ENCODE measurements at regions of chr13 and their contacts with region 1.

Region 1: DNA sequence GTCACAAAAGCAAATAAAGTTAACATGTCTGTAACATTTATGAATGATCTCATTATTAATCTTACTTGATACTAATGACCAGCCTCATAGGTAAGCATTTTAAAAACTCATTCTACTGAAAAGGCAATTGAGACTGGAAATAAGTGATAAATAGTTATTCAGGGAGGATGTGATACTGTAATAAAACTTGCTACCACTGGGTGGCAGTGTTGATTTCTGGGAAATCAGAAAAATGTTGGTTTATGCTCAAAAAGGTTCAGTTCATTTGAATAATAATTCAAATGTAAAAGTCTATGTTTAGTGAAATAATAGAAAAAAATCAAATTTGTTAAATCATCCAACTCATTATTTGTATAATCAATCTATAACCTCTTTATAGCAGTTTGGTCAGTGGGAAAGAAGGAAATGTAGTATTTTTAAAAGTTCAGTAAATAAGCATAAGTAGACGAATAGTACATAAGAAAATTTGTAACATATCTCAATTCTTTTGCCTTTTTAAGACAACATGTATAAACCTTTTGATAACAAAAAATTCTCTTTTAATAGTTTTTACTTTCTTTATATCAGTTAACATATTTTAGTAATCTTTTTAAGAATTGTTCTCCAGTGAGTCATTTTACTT is 9.6 kb downstream of the ABHD13 start:
- DNase-seq: peak in 4 of 5 donors; percentile 41 to 56 (median 46)
- H3K4me3 ChIP-seq: no peak overlapping the region
- H3K4me3 Mint-ChIP-seq: no peak overlapping the region
- H3K27ac ChIP-seq: no peak overlapping the region
- H3K27ac Mint-ChIP-seq: peak overlapping the region in 1 of 7 donors; percentile 69
- H3K4me1 ChIP-seq: peaks cover 43% of the 10 kb centered on the region
- H3K4me1 Mint-ChIP-seq: peaks cover 41 to 74% (median 60%) of the 10 kb centered on the region in 4 donors
- H3K27me3 ChIP-seq: no peaks in the 10 kb centered on the region
- H3K27me3 Mint-ChIP-seq: no peaks in the 10 kb centered on the region

Region 2: DNA sequence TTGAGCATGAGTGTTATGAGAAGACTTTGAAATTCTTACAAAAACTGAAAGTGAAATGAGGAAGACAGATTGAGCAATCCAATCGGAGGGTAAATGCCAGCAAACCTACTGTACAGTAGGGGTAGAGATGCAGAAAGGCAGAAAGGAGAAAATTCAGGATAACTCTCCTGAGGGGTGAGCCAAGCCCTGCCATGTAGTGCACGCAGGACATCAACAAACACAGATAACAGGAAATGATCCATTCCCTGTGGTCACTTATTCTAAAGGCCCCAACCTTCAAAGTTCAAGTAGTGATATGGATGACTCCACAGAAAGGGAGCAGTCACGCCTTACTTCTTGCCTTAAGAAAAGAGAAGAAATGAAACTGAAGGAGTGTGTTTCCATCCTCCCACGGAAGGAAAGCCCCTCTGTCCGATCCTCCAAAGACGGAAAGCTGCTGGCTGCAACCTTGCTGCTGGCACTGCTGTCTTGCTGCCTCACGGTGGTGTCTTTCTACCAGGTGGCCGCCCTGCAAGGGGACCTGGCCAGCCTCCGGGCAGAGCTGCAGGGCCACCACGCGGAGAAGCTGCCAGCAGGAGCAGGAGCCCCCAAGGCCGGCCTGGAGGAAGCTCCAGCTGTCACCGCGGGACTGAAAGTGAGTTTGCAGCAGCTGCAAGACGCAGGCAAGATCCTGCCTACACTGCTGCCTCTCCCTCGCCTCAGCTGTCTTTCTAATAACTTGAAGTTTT is 42.0 kb after region 1 on chr13 and contains the start of gene TNFSF13B:
- CTCF ChIA-PET with region 1: interaction called, 3 read pairs
- POLR2A ChIA-PET with region 1: interaction called, 4 read pairs
- intact Hi-C with region 1: loop called (anchors 1 kb)
- DNase-seq: peak; percentile 16 to 60 (median 28)
- H3K4me3 ChIP-seq: peak within 1 kb of the TSS; percentile 49 to 58
- H3K4me3 Mint-ChIP-seq: peak within 1 kb of the TSS; percentile 83 to 95 (median 90)
- H3K27ac ChIP-seq: peak within 1 kb of the TSS; percentile 51
- H3K27ac Mint-ChIP-seq: peak within 1 kb of the TSS; percentile 81 to 94 (median 90)
- H3K4me1 ChIP-seq: peaks cover 31% of the 10 kb centered on the region
- H3K4me1 Mint-ChIP-seq: peaks cover 32 to 72% (median 47%) of the 10 kb centered on the region in 4 donors
- H3K27me3 ChIP-seq: no peaks in the 10 kb centered on the region
- H3K27me3 Mint-ChIP-seq: no peaks in the 10 kb centered on the region
- total RNA-seq, gene TNFSF13B: 35.8 to 37.9 TPM

Region 3: GRCh38 chr13:108305655-108306054 is 77.9 kb after region 1 on chr13:
- CTCF ChIA-PET with region 1: interaction called, 3 read pairs
- POLR2A ChIA-PET with region 1: interaction called, 3 read pairs
- intact Hi-C with region 1: loop called (anchors 2 kb)
- DNase-seq: no peak
- H3K4me3 ChIP-seq: no peak overlapping the region
- H3K4me3 Mint-ChIP-seq: peak overlapping the region in 3 of 8 donors; percentile 28 to 44 (median 34)
- H3K27ac ChIP-seq: no peak overlapping the region
- H3K27ac Mint-ChIP-seq: peak overlapping the region in 6 of 7 donors; percentile 15 to 91 (median 44)
- H3K4me1 ChIP-seq: peaks cover 26% of the 10 kb centered on the region
- H3K4me1 Mint-ChIP-seq: peaks cover 10 to 31% (median 14%) of the 10 kb centered on the region in 4 donors
- H3K27me3 ChIP-seq: no peaks in the 10 kb centered on the region
- H3K27me3 Mint-ChIP-seq: no peaks in the 10 kb centered on the region

Region 4: GRCh38 chr13:108322206-108322824 is 94.6 kb after region 1 on chr13:
- CTCF ChIA-PET with region 1: interaction called, 3 read pairs
- POLR2A ChIA-PET with region 1: interaction called, 3 read pairs
- intact Hi-C with region 1: loop called (anchors 1 kb)
- DNase-seq: peak in 4 of 5 donors; percentile 51 to 60 (median 54)
- H3K4me3 ChIP-seq: no peak overlapping the region
- H3K4me3 Mint-ChIP-seq: peak overlapping the region in 2 of 8 donors; percentile 37 to 40
- H3K27ac ChIP-seq: no peak overlapping the region
- H3K27ac Mint-ChIP-seq: peak overlapping the region in 1 of 7 donors; percentile 41
- H3K4me1 ChIP-seq: peaks cover 21% of the 10 kb centered on the region
- H3K4me1 Mint-ChIP-seq: peaks cover 13 to 49% (median 33%) of the 10 kb centered on the region in 4 donors
- H3K27me3 ChIP-seq: no peaks in the 10 kb centered on the region
- H3K27me3 Mint-ChIP-seq: no peaks in the 10 kb centered on the region

Region 5: GRCh38 chr13:108407495-108407894 is 179.7 kb after region 1 on chr13:
- CTCF ChIA-PET with region 1: no interaction called
- POLR2A ChIA-PET with region 1: no interaction called
- intact Hi-C with region 1: loop called (anchors 5 kb)
- DNase-seq: no peak
- H3K4me3 ChIP-seq: no peak overlapping the region
- H3K4me3 Mint-ChIP-seq: peak overlapping the region in 1 of 8 donors; percentile 27
- H3K27ac ChIP-seq: no peak overlapping the region
- H3K27ac Mint-ChIP-seq: peak overlapping the region in 6 of 7 donors; percentile 22 to 87 (median 62)
- H3K4me1 ChIP-seq: peaks cover 52% of the 10 kb centered on the region
- H3K4me1 Mint-ChIP-seq: peaks cover 41 to 71% (median 57%) of the 10 kb centered on the region in 4 donors
- H3K27me3 ChIP-seq: no peaks in the 10 kb centered on the region
- H3K27me3 Mint-ChIP-seq: no peaks in the 10 kb centered on the region

Region 6: GRCh38 chr13:108895220-108895704 is 667.5 kb after region 1 on chr13:
- CTCF ChIA-PET with region 1: interaction called, 8 read pairs
- POLR2A ChIA-PET with region 1: no interaction called
- intact Hi-C with region 1: loop called (anchors 1 kb)
- DNase-seq: peak in 4 of 5 donors; percentile 19 to 31 (median 26)
- H3K4me3 ChIP-seq: no peak overlapping the region
- H3K4me3 Mint-ChIP-seq: no peak overlapping the region
- H3K27ac ChIP-seq: no peak overlapping the region
- H3K27ac Mint-ChIP-seq: no peak overlapping the region
- H3K4me1 ChIP-seq: peaks cover 8% of the 10 kb centered on the region
- H3K4me1 Mint-ChIP-seq: peaks cover 5 to 14% (median 10%) of the 10 kb centered on the region in 4 donors
- H3K27me3 ChIP-seq: no peaks in the 10 kb centered on the region
- H3K27me3 Mint-ChIP-seq: peaks cover 0 to 1% of the 10 kb centered on the region in 2 donors

Region 7: GRCh38 chr13:108915634-108916512 is 688.1 kb after region 1 on chr13:
- CTCF ChIA-PET with region 1: no interaction called
- POLR2A ChIA-PET with region 1: no interaction called
- intact Hi-C with region 1: loop called (anchors 5 kb)
- DNase-seq: peak; percentile 19 to 84 (median 30)
- H3K4me3 ChIP-seq: no peak overlapping the region
- H3K4me3 Mint-ChIP-seq: peak overlapping the region in 7 of 8 donors; percentile 69 to 86 (median 78)
- H3K27ac ChIP-seq: no peak overlapping the region
- H3K27ac Mint-ChIP-seq: peak overlapping the region in 6 of 7 donors; percentile 32 to 81 (median 71)
- H3K4me1 ChIP-seq: peaks cover 16% of the 10 kb centered on the region
- H3K4me1 Mint-ChIP-seq: peaks cover 10 to 17% (median 13%) of the 10 kb centered on the region in 4 donors
- H3K27me3 ChIP-seq: no peaks in the 10 kb centered on the region
- H3K27me3 Mint-ChIP-seq: no peaks in the 10 kb centered on the region